Breast epithelium (tissue), 4 donors: ENCODE measurements at regions of chr12 and their contacts with region 1.

Region 1: DNA sequence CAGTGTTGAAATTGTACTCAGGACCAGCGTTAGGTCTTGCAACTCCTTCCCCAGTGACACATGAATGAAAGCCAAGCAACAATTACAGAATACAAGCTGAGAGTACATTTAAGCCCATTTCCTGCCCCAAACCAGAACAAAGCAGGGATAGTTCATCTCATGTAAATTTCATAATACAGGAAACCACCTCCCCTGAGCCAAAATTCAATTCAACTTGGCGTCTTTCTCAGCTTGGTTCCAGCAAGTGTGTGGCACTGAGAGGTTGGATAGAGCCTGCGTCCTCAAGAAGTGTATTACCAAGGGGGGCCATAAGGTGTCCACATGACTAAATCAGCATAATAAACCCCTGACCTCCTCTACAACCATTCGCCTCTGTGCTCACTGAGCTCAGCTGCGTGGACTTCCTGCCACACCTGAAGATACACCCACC is 278.9 kb upstream of the CRY1 start:
- DNase-seq: peak in 1 of 2 donors; percentile 56
- H3K4me3 ChIP-seq: no peak overlapping the region
- H3K27ac ChIP-seq: no peak overlapping the region
- H3K4me1 ChIP-seq: peaks cover 0 to 6% of the 10 kb centered on the region in 2 donors
- H3K27me3 ChIP-seq: no peaks in the 10 kb centered on the region
- CTCF ChIP-seq: no peak
- POLR2A ChIP-seq: no peak

Region 2: DNA sequence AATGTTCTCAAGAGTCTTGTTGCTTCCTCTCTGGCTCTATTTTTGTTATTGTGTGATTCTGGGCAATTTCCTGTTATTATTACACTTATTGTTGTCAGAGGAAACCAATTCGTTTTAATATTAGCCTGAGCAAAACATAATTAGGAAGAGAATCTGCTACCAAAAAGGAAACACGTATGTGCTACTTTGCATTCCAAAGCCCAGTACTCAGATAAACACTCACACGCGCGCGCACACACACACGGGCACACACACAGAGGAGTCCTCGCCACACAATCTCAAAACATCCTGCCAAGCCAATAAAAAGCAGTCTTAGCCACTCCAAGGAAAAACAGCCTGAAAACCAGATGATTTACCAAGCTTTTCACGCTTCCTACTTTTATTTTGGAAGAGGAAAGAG is 1634.2 kb before region 1 on chr12:
- intact Hi-C with region 1: no loop called
- DNase-seq: no peak
- H3K4me3 ChIP-seq: no peak overlapping the region
- H3K27ac ChIP-seq: peak overlapping the region in 1 of 2 donors; percentile 39
- H3K4me1 ChIP-seq: peaks cover 0 to 4% of the 10 kb centered on the region in 2 donors
- H3K27me3 ChIP-seq: no peaks in the 10 kb centered on the region
- CTCF ChIP-seq: no peak
- POLR2A ChIP-seq: no peak

Region 3: DNA sequence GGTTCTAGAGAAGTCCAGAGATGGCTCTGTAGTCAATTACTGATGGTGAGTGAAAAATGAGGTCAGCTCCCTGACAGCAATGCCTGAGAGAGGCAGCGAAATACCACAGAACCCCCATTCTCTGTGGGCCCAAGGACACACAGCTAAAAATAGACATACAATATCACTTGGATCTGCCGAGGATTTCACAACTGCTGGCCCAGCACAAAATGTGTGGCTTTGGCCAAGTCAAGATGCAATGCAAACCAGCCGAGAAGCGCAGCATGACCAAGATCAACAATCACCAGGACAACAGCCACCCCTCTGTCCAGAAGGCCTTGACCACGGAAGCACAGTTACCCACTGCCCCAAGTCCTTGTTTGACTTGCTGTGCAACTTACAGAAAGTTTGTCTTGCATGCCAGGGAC is 1176.6 kb before region 1 on chr12:
- intact Hi-C with region 1: loop called (anchors 5 kb)
- DNase-seq: peak; percentile 55 to 60
- H3K4me3 ChIP-seq: peak overlapping the region in 1 of 3 donors; percentile 12
- H3K27ac ChIP-seq: peak overlapping the region; percentile 46 to 82
- H3K4me1 ChIP-seq: no peaks in the 10 kb centered on the region
- H3K27me3 ChIP-seq: no peaks in the 10 kb centered on the region
- CTCF ChIP-seq: no peak
- POLR2A ChIP-seq: no peak

Region 4: GRCh38 chr12:106994579-106995220 is 377.5 kb before region 1 on chr12:
- intact Hi-C with region 1: loop called (anchors 5 kb)
- DNase-seq: no peak
- H3K4me3 ChIP-seq: no peak overlapping the region
- H3K27ac ChIP-seq: no peak overlapping the region
- H3K4me1 ChIP-seq: no peaks in the 10 kb centered on the region
- H3K27me3 ChIP-seq: no peaks in the 10 kb centered on the region
- CTCF ChIP-seq: no peak
- POLR2A ChIP-seq: no peak

Region 5: GRCh38 chr12:107503887-107504885 is 131.9 kb after region 1 on chr12:
- intact Hi-C with region 1: no loop called
- DNase-seq: no peak
- H3K4me3 ChIP-seq: no peak overlapping the region
- H3K27ac ChIP-seq: no peak overlapping the region
- H3K4me1 ChIP-seq: no peaks in the 10 kb centered on the region
- H3K27me3 ChIP-seq: no peaks in the 10 kb centered on the region
- CTCF ChIP-seq: no peak
- POLR2A ChIP-seq: no peak

Region 6: DNA sequence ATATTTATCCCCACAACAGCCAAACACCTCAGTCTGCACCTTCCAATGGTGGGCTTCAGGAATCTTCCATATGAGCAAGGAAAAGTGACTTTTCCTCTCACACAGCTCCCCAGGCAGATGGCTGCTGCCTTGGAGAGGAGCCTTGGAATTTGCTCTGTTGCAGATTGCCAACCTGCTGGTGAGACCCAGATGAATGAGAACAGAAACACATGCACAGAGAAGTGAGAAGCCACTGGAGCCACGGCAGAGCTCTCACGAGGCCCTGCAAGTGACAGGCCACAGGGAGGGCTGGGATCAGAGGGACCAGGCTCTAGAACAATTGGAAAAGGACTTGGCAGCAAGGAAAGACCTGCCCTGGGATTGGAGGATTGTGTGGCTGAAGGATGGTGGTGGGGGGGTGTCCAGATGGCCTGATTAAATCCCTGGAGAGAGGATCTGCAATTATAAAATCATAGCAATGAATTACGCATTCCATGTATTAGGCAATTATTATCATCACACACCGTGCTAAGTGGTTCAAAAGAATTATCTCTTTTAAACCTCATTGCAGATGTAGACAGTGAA is 228.4 kb after region 1 on chr12:
- intact Hi-C with region 1: no loop called
- DNase-seq: no peak
- H3K4me3 ChIP-seq: no peak overlapping the region
- H3K27ac ChIP-seq: no peak overlapping the region
- H3K4me1 ChIP-seq: no peaks in the 10 kb centered on the region
- H3K27me3 ChIP-seq: no peaks in the 10 kb centered on the region
- CTCF ChIP-seq: no peak
- POLR2A ChIP-seq: no peak